ENCODE measurements at regions of chr10 and their contacts with region 1.

Region 1: DNA sequence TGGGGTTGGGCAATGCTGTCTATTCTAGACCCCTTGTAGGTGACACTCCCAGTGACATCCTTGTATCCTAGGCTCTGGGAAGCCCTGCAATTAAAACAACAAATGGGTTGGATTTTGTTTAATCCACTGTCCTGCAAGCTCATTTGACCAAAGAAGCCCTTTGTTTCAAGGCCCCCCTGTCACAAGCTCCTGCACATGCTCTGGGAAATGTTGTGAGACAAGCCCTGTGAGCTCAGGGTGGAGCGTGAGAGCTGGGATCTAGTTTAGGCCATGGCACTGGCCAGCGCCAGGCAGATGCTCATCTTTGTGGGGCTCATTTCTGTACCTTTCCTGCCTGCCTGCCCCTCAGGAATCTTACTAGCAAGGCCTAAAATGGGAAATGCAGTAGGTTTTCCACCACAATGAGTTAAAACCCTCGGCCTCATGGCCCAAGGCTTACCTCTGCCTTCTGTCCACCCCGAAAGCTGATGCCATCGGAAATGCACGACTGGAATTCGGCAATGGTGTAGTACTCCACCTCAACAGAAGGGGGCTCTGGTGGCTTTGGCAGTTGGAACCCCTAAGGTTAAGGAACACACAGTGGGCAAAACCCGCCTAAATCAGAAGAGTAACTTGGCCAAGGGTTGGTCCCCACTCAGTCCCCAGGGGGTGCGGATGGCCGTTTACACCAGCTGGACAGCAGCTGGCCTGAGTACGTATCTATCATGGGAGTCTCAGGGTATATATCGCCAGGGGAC is 112.0 kb downstream of the NEURL1 start:
- DNase-seq: no peak
- ATAC-seq: peak; percentile 56

Region 2: GRCh38 chr10:103659674-103660363 is 54.3 kb after region 1 on chr10:
- intact Hi-C with region 1: no loop called
- DNase-seq: peak; percentile 83
- ATAC-seq: peak; percentile 85

Region 3: GRCh38 chr10:103685880-103686669 is 80.5 kb after region 1 on chr10:
- intact Hi-C with region 1: loop called (anchors 1 kb)
- DNase-seq: peak; percentile 87
- ATAC-seq: peak; percentile 75